ENCODE measurements at regions of chr7 and their contacts with region 1.

Region 1: GRCh38 chr7:99312316-99313203 is 13.1 kb upstream of the ARPC1A start:
- DNase-seq: peak; percentile 94
- H3K4me3 ChIP-seq: no peak overlapping the region
- H3K27ac ChIP-seq: no peak overlapping the region
- H3K4me1 ChIP-seq: peaks cover 0 to 8% (median 7%) of the 10 kb centered on the region in 4 donors
- H3K27me3 ChIP-seq: no peaks in the 10 kb centered on the region
- CTCF ChIP-seq: peak; percentile 84 to 94 (median 91)
- EP300 ChIP-seq: no peak
- POLR2A ChIP-seq: no peak

Region 2: DNA sequence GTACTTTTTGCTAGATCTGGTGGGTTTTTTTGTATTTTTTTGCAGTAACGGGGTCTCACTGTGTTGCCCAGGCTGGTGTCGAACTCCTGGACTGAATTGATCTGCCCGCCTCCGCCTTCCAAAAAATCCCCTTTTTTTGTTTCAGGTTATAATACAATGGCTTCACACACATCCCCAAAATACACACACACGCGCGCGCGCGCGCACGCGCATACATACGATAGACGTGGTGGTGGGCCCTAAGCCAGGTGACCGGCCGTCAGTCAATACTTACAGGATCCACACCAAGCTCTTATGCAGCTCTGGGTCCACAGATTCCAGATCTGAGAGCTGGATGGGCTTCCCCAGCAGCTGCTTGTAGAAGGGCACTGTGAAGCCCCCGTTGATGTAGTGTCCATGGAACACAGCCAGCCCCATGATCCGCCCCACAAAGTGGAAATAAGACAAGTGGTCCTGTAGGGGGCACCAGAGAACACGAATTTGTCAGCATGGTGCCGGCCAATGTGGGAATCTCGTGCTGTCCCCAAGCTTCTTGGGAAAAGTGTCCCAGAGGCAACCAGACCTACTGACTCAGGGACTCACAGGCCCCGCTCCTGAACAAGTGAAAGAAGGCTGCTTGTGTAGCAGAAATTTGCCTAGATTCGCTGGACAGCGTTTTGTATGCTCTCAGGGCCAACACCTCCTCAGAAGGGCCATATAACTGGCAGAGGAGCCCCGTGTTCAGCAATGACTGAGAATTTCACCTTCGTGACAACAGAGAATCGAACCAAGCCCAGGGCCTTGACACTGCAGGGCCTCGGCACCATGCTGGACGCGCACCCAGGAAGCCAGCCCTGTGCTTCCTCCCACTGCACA is 272.2 kb before region 1 on chr7:
- intact Hi-C with region 1: loop called (anchors 1 kb)
- DNase-seq: peak; percentile 96
- H3K4me3 ChIP-seq: no peak overlapping the region
- H3K27ac ChIP-seq: peak overlapping the region; percentile 38 to 72 (median 60)
- H3K4me1 ChIP-seq: peaks cover 5 to 49% (median 28%) of the 10 kb centered on the region in 4 donors
- H3K27me3 ChIP-seq: no peaks in the 10 kb centered on the region
- CTCF ChIP-seq: peak; percentile 71 to 80 (median 80)
- EP300 ChIP-seq: no peak
- POLR2A ChIP-seq: no peak